H1 (cell line): ENCODE measurements at regions of chr10 and their contacts with region 1.

Region 1: DNA sequence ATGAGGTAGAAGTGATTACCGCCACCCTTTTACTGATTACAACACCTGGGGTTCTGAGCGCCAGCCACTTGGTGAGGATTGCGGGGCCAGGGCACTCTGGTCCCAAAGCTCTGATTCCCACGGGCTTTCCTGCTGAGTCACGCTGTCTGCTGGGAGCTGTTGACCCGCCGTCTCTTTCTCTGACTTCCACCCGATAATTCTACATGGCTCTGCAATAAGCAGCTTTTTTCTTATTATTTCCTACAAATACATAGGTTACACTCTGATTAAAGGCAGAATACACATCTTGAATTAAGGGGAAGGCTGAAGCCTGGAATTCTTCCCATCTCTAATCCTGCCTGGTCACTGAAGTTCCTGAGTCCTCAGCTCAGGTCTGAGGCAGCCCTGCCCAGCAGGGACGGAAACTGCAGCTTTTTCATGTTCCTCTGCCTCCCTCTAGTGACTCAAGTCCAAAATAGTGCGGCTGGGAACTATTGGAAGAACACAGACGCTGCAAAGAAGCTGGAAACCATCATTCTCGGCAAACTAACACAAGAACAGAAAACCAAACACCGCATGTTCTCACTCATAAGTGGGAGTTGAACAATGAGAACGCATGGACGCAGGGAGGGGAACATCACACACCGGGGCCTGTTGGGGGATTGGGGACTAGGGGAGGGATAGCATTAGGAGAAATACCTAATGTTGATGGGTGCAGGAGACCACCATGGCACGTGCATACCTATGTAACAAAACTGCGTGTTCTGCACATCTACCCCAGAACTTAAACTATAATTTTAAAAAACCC is 178.3 kb downstream of the PRKCQ start:
- DNase-seq: peak; percentile 57 to 65
- H3K4me3 ChIP-seq: peak overlapping the region in 1 of 4 experiments; percentile 44; a peak in 2 of 8 replicates
- H3K27ac ChIP-seq: no peak overlapping the region
- H3K4me1 ChIP-seq: no peaks in the 10 kb centered on the region; a peak in 2 of 7 replicates
- H3K27me3 ChIP-seq: no peaks in the 10 kb centered on the region
- CTCF ChIP-seq: peak; percentile 55 to 88 (median 80)
- EP300 ChIP-seq: no peak
- POLR2A ChIP-seq: no peak
- RAD21 ChIP-seq: peak; percentile 93 to 96

Region 2: DNA sequence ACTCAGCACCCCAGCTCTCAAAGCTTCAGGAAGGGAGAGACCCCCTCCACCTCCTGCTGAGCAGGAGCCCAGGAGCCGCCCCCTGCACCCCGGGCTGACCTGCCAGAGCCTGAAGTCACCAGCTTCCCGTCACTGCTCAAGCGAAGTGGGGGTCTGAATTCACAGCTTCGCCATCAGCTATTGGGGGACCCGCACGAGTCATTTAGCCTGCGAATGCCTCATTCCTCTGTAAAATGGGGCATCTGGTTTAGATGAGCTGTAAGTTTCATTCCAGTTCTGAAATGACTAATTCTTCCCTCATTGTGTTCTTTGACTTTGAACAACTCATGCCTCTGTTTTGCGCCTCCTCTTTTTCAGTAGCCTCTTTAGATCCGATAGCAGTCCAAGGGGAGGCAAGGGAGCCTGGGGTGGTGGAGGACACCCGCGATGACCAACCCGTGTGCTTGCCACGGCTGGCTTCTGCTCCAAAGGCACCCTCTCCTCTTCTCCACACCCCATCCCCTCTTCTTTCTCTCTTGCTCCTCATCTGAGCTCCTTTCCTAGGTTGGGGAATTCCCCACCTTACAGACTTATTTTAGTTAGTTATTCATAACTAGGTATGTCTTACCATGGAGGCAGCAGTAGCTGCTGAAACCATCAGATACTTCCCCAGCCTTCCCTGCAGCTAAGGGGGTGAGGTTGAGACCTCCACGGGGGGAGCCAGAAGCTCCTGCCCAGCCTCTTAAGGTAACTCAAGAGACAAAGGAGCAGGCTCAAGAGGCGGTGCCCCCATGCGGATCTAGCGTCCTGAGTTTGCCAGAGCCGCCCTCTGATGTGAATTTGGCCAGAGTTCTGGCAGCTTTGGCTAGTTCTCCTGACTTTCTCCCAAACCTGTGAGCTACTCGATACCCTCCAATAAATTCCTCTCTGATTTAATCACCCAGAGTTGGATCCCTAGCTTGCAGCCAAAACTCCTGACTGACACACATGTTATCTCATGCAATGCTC is 265.2 kb before region 1 on chr10:
- CTCF ChIA-PET with region 1: interaction called, 12 read pairs
- POLR2A ChIA-PET with region 1: no interaction called
- DNase-seq: no peak
- H3K4me3 ChIP-seq: no peak overlapping the region
- H3K27ac ChIP-seq: no peak overlapping the region
- H3K4me1 ChIP-seq: peaks cover 2 to 18% (median 8%) of the 10 kb centered on the region in 4 experiments
- H3K27me3 ChIP-seq: 0 out of 7 replicates have a peak, but pooled peaks cover 0 to 2% (median 0%) of the 10 kb centered on the region in 4 experiments
- CTCF ChIP-seq: no peak
- EP300 ChIP-seq: no peak
- POLR2A ChIP-seq: no peak
- RAD21 ChIP-seq: no peak

Region 3: GRCh38 chr10:6195846-6196245 is 205.9 kb before region 1 on chr10:
- CTCF ChIA-PET with region 1: interaction called, 13 read pairs
- POLR2A ChIA-PET with region 1: no interaction called
- DNase-seq: no peak
- H3K4me3 ChIP-seq: no peak overlapping the region
- H3K27ac ChIP-seq: no peak overlapping the region
- H3K4me1 ChIP-seq: peaks cover 0 to 3% (median 1%) of the 10 kb centered on the region in 4 experiments; a peak in 5 of 7 replicates
- H3K27me3 ChIP-seq: peaks cover 13 to 20% (median 19%) of the 10 kb centered on the region in 4 experiments; a peak in 6 of 7 replicates
- CTCF ChIP-seq: no peak
- EP300 ChIP-seq: no peak
- POLR2A ChIP-seq: no peak
- RAD21 ChIP-seq: no peak

Region 4: DNA sequence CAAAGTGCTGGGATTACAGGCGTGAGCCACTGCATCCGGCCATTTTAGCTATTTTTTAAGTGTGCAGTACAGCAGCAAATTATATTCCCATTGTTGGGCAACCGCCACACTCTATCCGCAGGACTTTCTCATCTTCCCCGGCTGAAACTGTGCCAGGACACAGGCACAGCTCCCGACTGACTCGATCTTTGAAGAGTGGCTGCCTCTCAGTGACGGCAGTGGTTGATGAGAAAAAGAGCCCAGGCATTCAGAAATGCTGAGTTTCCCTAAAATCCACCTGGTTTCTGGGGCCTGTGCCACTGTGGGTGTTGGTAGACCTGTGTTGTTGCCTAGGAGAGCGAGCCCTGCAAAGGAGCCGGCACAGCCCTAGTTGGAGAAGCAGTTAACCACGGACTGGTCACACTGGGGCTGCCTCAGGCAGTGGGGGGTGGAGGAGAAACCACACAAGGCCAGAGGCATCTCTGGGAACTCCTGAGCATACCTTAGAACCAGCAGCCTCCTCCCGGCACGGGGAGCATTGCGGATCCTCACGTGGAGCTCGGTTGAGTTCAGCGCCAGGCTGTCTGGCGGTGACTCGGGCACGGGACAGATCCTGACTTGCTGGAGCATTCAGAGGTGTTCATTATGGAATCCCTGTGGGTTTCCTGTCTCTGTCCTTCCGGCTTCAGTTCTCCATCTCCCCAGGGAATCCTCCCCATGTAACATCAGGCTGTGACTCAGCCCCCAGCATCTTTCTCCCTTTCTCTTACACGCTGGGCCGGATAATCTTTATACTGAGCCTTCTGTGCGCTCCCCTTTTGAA is 182.9 kb before region 1 on chr10:
- CTCF ChIA-PET with region 1: interaction called, 14 read pairs
- POLR2A ChIA-PET with region 1: interaction called, 3 read pairs
- DNase-seq: no peak
- H3K4me3 ChIP-seq: no peak overlapping the region
- H3K27ac ChIP-seq: no peak overlapping the region
- H3K4me1 ChIP-seq: no peaks in the 10 kb centered on the region; a peak in 1 of 7 replicates
- H3K27me3 ChIP-seq: no peaks in the 10 kb centered on the region
- CTCF ChIP-seq: no peak
- EP300 ChIP-seq: no peak
- POLR2A ChIP-seq: no peak
- RAD21 ChIP-seq: no peak

Region 5: GRCh38 chr10:6388261-6388893 is 13.4 kb before region 1 on chr10:
- CTCF ChIA-PET with region 1: interaction called, 19 read pairs
- POLR2A ChIA-PET with region 1: interaction called, 3 read pairs
- DNase-seq: no peak
- H3K4me3 ChIP-seq: no peak overlapping the region
- H3K27ac ChIP-seq: no peak overlapping the region
- H3K4me1 ChIP-seq: no peaks in the 10 kb centered on the region
- H3K27me3 ChIP-seq: no peaks in the 10 kb centered on the region
- CTCF ChIP-seq: no peak
- EP300 ChIP-seq: no peak
- POLR2A ChIP-seq: no peak
- RAD21 ChIP-seq: no peak

Region 6: GRCh38 chr10:6530211-6530840 is 128.6 kb after region 1 on chr10:
- CTCF ChIA-PET with region 1: no interaction called
- POLR2A ChIA-PET with region 1: no interaction called
- DNase-seq: no peak
- H3K4me3 ChIP-seq: no peak overlapping the region
- H3K27ac ChIP-seq: no peak overlapping the region
- H3K4me1 ChIP-seq: peaks cover 0 to 5% (median 3%) of the 10 kb centered on the region in 4 experiments; a peak in 2 of 7 replicates
- H3K27me3 ChIP-seq: no peaks in the 10 kb centered on the region
- CTCF ChIP-seq: no peak
- EP300 ChIP-seq: no peak
- POLR2A ChIP-seq: no peak
- RAD21 ChIP-seq: no peak

Region 7: GRCh38 chr10:6667679-6668270 is 266.0 kb after region 1 on chr10:
- CTCF ChIA-PET with region 1: interaction called, 10 read pairs
- POLR2A ChIA-PET with region 1: no interaction called
- DNase-seq: peak in 1 of 2 experiments; percentile 59
- H3K4me3 ChIP-seq: no peak overlapping the region
- H3K27ac ChIP-seq: no peak overlapping the region
- H3K4me1 ChIP-seq: no peaks in the 10 kb centered on the region
- H3K27me3 ChIP-seq: no peaks in the 10 kb centered on the region
- CTCF ChIP-seq: peak in 2 of 3 experiments; percentile 66 to 76; a peak in 3 of 4 replicates
- EP300 ChIP-seq: no peak
- POLR2A ChIP-seq: no peak
- RAD21 ChIP-seq: peak; percentile 86 to 89